Heart left ventricle (tissue), 16 donors: ENCODE measurements at regions of chr6 and their contacts with region 1.

Region 1: DNA sequence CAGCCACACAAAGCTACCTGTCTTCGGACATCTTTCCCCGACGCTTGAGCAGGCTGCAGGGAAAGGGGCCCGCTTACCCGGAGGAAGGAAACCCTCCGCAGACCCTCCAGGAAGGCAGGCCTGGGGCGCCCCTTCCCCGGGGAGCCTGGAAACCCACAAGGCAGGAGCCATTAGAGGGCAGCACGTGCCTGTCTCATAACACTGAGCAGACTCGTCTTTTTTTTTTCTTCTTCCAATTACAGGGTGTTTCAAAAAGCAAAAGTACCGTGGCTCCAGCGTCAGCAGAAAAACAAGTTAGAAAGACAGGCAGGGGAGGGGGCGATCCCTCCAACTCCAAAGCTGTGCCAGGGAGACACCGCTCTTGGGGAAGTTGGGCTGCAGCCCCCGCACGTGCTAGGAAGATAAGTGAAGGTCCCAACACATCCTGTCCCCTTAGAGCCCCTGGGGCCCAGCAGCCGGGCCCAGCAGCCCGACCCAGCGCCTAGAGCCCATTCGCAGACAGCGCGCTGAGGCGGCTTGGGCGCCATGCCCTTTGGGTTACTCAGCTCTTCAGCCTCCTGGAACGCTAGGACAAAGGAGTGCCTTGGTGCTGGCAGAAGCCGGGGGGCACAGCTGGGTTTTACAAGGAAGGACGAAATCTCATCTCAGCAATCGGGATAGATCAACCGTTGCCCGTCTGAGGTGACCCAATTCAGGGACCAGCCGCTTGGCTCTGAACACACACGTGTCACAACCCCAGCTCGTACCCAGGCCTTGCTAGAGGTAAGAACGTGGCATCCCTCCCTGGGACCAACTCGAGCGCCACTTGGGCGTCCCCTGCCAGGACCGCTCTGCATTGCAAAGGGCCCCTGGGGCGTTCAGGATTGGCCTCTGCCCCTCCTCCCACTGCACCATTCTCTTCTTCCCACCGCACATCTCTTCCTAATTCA is 136.3 kb downstream of the LY86 start:
- DNase-seq: peak; percentile 69 to 83 (median 72)
- ATAC-seq: peak; percentile 77 to 91 (median 86)
- H3K4me3 ChIP-seq: peak overlapping the region in 11 of 12 donors; percentile 22 to 51 (median 46)
- H3K27ac ChIP-seq: peak overlapping the region; percentile 62 to 96 (median 88)
- H3K4me1 ChIP-seq: peaks cover 2 to 55% (median 26%) of the 10 kb centered on the region in 12 donors
- H3K27me3 ChIP-seq: no peaks in the 10 kb centered on the region
- CTCF ChIP-seq: peak; percentile 43 to 85 (median 71)
- POLR2A ChIP-seq: no peak

Region 2: GRCh38 chr6:6676910-6677441 is 47.8 kb before region 1 on chr6:
- intact Hi-C with region 1: loop called in 2 of 10 experiments (anchors 5 kb)
- DNase-seq: peak in 4 of 5 donors; percentile 63 to 75 (median 72)
- ATAC-seq: peak; percentile 73 to 87 (median 86)
- H3K4me3 ChIP-seq: no peak overlapping the region
- H3K27ac ChIP-seq: peak overlapping the region in 11 of 12 donors; percentile 15 to 77 (median 58)
- H3K4me1 ChIP-seq: peaks cover 0 to 45% (median 11%) of the 10 kb centered on the region in 12 donors
- H3K27me3 ChIP-seq: no peaks in the 10 kb centered on the region
- CTCF ChIP-seq: peak; percentile 95 to 99 (median 98)
- POLR2A ChIP-seq: no peak

Region 3: DNA sequence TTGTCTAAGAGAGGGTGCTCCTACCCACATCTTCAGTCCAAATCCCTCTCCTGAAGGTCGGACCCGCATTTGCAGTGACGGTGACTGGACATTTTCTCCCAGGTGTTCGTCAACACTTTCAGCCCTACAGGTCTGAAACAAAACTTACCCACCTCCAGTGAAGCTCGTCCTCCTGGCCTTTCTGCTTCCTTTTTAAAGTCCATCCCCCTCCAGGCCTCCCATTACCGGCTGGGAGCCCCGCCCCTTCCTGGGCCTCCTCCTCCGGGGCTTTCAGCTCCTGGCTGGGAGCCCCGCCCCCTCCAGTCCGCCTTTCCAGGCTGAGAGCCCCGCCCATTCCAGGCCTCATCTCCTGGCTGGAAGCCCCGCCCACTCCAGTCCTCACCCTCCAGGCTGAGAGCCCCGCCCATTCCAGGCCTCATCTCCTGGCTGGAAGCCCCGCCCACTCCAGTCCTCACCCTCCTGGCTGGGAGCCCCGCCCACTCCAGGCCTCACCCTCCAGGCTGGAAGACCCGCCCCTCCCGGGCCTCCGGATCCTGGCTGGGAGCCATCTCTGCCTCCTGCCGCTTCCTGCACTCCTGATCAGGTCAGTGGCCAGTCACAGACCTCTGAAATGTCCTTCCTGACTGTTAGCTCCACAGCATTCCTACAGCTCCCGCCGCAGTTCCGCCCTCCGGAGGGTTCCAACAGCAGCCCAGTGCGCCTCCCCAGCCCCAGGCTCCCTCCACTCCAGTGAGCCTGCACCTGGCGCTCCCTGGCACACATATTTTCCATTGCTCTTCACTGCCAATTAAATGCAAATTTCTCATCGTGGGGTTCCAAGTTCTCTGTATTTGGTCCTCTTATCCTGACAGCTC is 37.8 kb before region 1 on chr6:
- intact Hi-C with region 1: loop called in 2 of 10 experiments (anchors 5 kb)
- DNase-seq: peak; percentile 94 to 97 (median 96)
- ATAC-seq: peak; percentile 90 to 95 (median 91)
- H3K4me3 ChIP-seq: peak overlapping the region in 10 of 12 donors; percentile 27 to 46 (median 38)
- H3K27ac ChIP-seq: peak overlapping the region; percentile 48 to 90 (median 84)
- H3K4me1 ChIP-seq: peaks cover 6 to 80% (median 37%) of the 10 kb centered on the region in 12 donors
- H3K27me3 ChIP-seq: no peaks in the 10 kb centered on the region
- CTCF ChIP-seq: no peak
- POLR2A ChIP-seq: peak in 1 of 2 donors; percentile 21

Region 4: GRCh38 chr6:6918216-6918983 is 193.6 kb after region 1 on chr6:
- intact Hi-C with region 1: loop called in 1 of 10 experiments (anchors 10 kb)
- DNase-seq: no peak
- ATAC-seq: peak in 3 of 4 donors; percentile 21 to 45 (median 21)
- H3K4me3 ChIP-seq: no peak overlapping the region
- H3K27ac ChIP-seq: no peak overlapping the region
- H3K4me1 ChIP-seq: peaks cover 0 to 30% (median 15%) of the 10 kb centered on the region in 12 donors
- H3K27me3 ChIP-seq: no peaks in the 10 kb centered on the region
- CTCF ChIP-seq: no peak
- POLR2A ChIP-seq: no peak

Region 5: GRCh38 chr6:6998194-6998569 is 273.4 kb after region 1 on chr6:
- intact Hi-C with region 1: loop called in 1 of 10 experiments (anchors 10 kb)
- DNase-seq: no peak
- ATAC-seq: no peak
- H3K4me3 ChIP-seq: no peak overlapping the region
- H3K27ac ChIP-seq: no peak overlapping the region
- H3K4me1 ChIP-seq: peaks cover 0 to 28% (median 6%) of the 10 kb centered on the region in 12 donors
- H3K27me3 ChIP-seq: no peaks in the 10 kb centered on the region
- CTCF ChIP-seq: no peak
- POLR2A ChIP-seq: no peak